GM10248 (cell line): ENCODE measurements at regions of chr19 and their contacts with region 1.

Region 1: GRCh38 chr19:12766051-12766521 is 9.3 kb downstream of the HOOK2 start:
- DNase-seq: peak; percentile 83
- CTCF ChIP-seq: peak; percentile 97

Region 2: GRCh38 chr19:12777217-12778016 is 11.3 kb after region 1 on chr19:
- CTCF ChIA-PET with region 1: interaction called, 91 read pairs
- POLR2A ChIA-PET with region 1: no interaction called
- DNase-seq: peak; percentile 75
- CTCF ChIP-seq: peak; percentile 94

Region 3: DNA sequence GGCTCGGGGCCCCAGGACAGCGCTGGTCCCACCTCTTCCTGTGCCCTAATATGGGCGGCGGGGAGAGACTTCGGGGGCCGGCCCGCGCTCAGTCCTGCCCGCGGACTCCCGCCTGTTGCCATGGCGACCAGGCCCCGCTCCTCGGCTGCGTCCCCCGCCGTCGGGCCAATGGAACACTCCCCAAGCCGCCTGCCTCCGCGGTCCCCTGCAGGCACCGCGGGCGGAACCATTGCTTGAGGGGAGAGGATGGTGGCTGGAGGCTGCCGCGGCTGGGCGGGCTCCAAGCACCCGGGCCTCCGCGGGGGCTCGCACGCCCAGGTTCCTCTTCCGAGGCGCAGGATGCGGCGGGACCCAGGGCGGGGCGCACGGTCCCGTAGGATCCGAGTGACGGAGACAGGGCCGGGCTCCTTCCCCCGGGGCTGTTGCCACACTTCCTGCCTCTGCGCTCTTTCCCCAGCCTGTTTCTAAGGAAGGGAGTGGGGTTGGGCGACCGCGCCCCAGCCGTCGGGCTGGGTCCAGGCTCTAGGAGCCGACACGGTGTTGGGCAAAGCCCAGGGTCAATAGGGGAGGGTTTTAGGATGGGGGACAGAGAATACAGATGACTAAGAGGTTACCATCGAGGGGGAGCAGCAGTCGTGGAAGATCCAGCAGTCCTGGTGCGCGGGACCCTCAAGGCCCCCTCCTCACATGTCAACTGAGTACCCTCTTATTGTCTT is 24.0 kb after region 1 on chr19:
- CTCF ChIA-PET with region 1: interaction called, 550 read pairs
- POLR2A ChIA-PET with region 1: interaction called, 25 read pairs
- DNase-seq: peak; percentile 94
- CTCF ChIP-seq: no peak

Region 4: DNA sequence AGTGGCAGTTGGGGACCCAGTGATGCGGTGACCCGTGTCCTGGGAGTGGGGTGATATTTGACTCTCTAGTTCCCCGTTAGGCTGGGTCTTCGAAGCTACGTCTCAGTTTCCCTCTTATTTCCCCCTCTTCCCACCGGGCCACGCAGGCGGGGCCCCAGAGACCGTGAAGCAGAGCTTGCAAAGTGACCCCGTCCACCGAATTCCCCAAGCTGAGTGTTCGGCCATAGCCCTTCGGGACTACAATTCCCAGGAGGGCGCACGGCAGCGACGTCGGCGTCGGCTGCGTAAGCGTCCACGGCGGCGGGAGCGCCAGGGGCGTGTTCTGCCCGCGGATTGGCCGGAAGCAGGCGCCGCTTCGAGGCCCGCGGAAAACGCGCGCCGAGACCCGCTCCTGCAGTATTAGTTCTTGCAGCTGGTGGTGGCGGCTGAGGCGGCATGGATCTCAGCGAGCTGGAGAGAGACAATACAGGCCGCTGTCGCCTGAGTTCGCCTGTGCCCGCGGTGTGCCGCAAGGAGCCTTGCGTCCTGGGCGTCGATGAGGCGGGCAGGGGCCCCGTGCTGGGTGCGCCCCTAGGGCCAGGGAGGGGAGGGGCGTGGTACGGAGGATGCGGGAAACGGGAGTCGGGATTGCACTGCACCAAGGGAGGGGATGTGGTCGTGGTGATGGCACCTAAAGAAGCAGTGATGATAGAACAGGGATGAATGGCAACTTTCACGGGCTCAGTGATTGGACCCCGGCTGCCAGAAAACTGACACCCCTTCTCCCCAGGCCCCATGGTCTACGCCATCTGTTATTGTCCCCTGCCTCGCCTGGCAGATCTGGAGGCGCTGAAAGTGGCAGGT is 40.4 kb after region 1 on chr19 and contains the start of gene RNASEH2A:
- CTCF ChIA-PET with region 1: interaction called, 550 read pairs
- POLR2A ChIA-PET with region 1: no interaction called
- DNase-seq: peak; percentile 98
- CTCF ChIP-seq: no peak

Region 5: DNA sequence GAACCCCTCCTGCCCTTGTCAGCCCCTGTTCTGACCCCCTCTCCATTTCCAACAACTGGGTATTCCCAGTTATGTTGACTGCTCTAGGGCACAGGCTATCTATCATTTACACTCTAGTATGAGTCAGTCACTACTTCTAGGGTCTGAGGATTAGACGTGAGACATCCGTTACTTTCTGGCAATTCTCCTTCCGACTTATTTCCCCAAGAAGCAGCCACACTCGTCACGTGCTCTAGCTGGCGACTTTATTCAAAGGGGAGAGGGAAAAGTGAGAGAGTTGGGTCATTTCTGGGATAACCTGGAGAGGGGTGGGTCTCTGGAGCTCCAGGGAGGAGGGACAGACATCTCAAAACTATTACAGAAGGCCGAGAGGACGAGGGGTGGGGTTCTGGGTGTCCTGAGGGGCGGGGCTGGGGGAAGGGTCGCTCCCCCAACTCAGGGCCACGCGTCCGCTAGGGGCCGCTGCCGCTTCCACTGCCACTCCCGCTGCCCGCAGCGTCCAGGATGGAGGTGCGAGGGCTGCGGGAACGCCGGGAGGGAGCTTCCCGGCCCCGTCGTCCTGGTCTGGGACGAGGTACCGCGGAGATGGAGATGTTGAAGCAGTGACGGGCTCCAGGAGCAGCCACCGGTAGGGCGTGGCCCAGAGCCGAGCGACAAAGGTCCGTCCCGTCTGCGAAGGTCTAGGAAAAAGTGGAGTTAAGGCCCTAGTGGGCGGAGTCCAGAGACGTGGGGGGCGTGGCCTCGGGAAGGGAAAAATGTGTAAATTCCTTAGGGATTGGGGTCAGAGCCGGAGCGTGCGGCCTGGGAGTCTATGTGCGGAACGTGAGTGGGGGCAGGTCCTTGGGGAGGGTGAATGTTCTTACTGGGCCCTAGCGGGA is 59.4 kb after region 1 on chr19:
- CTCF ChIA-PET with region 1: interaction called, 15 read pairs
- POLR2A ChIA-PET with region 1: no interaction called
- DNase-seq: no peak
- CTCF ChIP-seq: peak; percentile 47

Region 6: DNA sequence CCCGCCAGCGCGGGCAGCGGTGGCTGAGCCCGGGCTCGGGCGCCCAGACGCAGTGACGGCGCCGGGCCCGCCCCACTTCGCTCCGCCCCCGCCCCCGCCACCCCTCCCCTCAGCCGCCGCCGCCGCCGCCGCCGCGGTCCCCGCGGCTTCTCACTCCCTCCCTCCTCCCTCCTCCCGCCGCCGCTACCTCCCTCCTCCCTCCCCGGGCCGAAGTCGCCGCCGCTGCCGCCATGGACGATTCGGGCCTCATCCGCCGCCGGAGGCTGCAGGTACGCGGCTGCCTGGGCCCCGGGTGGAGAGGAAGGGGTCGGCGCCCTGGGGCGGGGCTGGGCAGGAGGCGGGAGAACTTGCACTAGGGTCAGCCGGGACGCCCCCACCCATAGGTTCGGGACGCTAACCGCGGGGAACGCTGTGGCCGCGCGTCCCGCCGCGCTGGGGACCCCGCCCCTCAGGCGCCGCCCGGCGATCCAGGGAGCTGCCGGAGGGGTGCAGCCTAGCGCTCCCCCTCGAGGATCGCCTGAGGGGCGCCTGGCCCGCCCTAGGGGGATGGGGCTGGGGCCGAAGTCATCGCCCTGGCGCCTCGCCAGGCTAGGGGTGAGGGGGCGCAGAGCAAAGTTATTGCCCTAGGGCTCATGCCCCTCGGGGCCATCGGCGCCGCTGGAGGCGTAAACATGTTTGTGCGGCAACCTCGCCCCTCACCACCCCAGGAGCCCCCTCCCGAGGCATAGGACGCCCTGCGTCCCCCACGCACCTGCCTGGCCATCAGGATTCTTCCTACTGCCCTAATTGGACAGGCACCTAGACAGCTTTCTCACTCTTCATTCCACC is 67.9 kb after region 1 on chr19:
- CTCF ChIA-PET with region 1: interaction called, 18 read pairs
- POLR2A ChIA-PET with region 1: no interaction called
- DNase-seq: peak; percentile 69
- CTCF ChIP-seq: no peak